Mammary epithelial cell (primary cell): ENCODE measurements at regions of chr4 and their contacts with region 1.

Region 1: DNA sequence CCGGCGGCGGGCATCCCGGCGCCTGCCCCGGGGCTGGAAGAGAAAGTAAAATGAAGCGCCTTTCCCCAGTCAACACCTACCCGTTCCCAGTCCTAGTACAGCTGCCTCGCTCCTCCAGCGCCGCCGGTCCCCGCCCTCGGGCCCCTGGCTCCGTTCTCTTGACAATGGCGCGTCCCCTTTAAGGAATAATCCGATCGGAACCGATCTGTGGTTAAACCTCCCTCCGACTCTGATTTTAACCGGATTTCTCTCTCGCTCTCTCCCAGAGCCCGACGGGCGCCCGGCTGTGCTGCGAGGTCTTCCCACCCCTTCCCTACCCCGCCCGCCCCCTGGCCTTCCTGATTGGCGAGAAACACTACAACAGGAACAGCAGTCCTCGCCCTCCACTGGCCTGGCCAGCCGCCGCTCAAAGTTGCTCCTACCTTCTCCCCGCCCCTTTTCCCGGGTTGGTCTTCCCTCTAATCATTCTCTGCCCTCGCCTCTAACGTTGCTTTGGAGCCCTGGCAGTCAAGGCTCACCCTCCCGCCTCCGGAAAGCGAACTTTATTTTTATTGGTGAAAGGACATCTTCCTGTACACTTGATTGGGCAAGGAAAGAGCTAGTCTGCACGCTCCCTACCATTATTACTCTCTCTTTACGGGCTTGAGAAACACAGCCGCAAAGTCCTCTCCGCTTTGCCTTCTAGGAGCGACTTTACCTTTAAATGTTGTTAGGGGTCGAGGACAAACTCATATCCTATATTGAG is at the start of gene FRYL:
- DNase-seq: peak; percentile 100
- H3K4me3 ChIP-seq: peak within 1 kb of the TSS; percentile 77 to 81 (median 79)
- H3K27ac ChIP-seq: peak within 1 kb of the TSS; percentile 87
- H3K4me1 ChIP-seq: peaks cover 23% of the 10 kb centered on the region
- H3K27me3 ChIP-seq: no peaks in the 10 kb centered on the region
- CTCF ChIP-seq: no peak
- total RNA-seq, gene FRYL: 74.7 to 75.7 TPM

Region 2: DNA sequence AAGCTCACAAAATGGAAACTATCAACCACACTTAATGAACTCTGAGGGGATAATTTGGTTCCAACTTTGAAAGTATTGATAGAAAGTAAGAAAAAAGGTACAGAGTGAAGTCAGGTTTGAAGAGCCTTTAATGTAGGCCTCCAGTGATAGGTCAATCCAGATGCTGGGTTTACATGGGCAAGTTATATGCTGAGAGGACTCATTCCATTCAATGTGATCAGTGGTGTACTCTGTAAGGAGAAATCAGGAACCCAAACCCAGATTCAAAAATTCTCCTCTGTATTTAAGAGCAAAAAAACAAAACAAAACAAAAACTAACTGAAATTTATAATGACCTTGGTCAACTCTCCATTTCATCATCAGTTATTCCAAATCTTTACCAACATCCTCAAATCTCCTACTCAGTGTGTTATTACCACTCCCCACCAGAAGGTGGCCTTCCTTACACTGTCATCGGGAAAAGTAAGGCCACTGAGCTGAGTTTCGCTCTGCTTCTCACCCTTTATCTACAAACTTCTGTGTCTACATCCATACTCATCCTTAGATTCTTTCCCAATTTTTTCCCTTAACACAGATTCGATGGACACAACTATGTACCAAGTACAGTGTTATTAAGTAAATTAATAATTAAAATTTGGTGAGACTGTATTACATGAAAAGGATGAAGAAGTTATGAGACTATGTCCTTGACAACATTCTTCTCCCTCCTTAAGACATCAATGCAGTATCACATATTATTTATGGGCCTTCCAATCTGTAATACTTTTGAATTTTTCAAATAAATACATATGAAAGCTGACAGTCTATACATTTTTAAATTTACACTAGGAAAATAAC is 201.8 kb before region 1 on chr4:
- CTCF ChIA-PET with region 1: interaction called, 5 read pairs
- dilution Hi-C with region 1: no loop called
- in situ Hi-C with region 1: no loop called
- intact Hi-C with region 1: loop called (anchors 1 kb)
- DNase-seq: peak; percentile 51
- H3K4me3 ChIP-seq: no peak overlapping the region
- H3K27ac ChIP-seq: no peak overlapping the region
- H3K4me1 ChIP-seq: no peaks in the 10 kb centered on the region
- H3K27me3 ChIP-seq: no peaks in the 10 kb centered on the region
- CTCF ChIP-seq: peak; percentile 79 to 90

Region 3: DNA sequence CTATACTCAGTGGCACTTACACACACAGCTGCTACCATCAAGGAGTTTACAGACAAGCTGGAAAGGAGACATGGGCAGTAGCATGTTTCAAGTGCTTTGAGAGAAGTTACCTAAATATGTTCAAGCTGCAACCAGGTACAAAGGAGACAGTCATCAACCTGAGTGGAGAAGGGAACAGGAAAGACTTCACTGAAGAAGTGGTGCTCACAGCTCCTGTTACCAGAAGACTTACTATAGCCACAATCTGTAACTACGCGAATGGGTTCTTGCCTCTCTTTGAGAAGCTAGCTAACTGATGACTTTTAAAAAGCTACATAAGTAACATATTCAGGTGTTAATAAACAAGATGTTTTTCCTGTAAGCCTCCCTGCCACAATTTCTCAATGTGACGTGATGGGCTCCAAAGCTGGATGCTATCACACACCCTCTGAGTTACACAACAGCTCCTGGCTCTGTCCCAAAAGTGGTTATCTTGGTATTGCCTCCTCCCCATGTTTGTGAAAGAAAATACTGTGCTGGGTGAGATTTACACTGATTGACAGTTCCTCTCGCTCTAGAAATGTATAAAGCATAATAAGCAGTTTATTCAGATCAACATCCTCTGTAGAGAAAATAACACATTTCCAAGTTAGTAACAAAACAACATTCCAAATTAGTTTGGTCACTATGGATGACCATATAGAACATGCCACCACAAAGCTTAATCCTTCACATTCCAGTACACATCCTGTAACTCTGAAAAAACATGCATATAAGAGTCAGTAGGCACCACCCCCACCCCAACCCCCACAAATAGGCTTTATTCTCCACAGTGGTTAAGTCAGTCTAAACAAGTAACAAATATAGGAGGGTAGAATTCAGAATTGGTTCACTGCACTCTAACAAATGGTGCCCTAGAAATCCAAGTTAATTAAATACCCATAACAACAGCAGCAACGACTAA is 81.9 kb before region 1 on chr4:
- CTCF ChIA-PET with region 1: no interaction called
- dilution Hi-C with region 1: loop called (anchors 5 kb)
- in situ Hi-C with region 1: loop called in 1 of 2 experiments (anchors 10 kb)
- intact Hi-C with region 1: loop called (anchors 1 kb)
- DNase-seq: peak; percentile 94
- H3K4me3 ChIP-seq: peak overlapping the region in 2 of 3 experiments; percentile 5 to 66
- H3K27ac ChIP-seq: peak overlapping the region; percentile 100
- H3K4me1 ChIP-seq: peaks cover 46% of the 10 kb centered on the region
- H3K27me3 ChIP-seq: no peaks in the 10 kb centered on the region
- CTCF ChIP-seq: no peak

Region 4: GRCh38 chr4:48830706-48831531 is 50.7 kb after region 1 on chr4 and contains the start of gene OCIAD1:
- CTCF ChIA-PET with region 1: no interaction called
- dilution Hi-C with region 1: no loop called
- in situ Hi-C with region 1: no loop called
- intact Hi-C with region 1: loop called (anchors 1 kb)
- DNase-seq: peak; percentile 98
- H3K4me3 ChIP-seq: peak within 1 kb of the TSS; percentile 50 to 98 (median 98)
- H3K27ac ChIP-seq: peak within 1 kb of the TSS; percentile 94
- H3K4me1 ChIP-seq: peaks cover 9% of the 10 kb centered on the region
- H3K27me3 ChIP-seq: no peaks in the 10 kb centered on the region
- CTCF ChIP-seq: no peak
- total RNA-seq, gene OCIAD1: 85.5 to 125 TPM

Region 5: DNA sequence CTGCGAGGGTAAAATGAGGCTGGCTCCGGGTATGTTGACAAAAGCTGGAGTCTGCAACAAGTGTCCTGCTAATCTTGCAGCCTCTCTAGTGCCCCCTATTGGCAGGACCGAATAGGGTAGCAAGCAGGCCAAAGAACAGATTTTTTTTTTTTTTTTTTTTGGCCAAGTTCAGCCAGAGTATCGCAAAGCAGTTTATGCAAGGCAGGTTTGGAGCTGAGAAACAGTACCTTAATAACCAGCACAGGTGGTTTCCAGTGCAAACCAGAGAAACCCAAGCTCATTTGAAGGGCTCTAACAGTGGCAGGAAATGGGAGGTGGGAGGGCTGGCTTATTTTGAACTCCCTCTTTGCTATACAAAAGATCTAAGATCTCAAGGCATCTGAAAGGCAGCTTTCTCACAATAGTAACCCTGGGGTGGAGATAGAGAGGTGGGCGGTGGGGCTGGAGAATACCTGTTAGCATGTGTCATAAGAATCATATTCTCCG is 164.6 kb after region 1 on chr4:
- CTCF ChIA-PET with region 1: interaction called, 7 read pairs
- dilution Hi-C with region 1: no loop called
- in situ Hi-C with region 1: no loop called
- intact Hi-C with region 1: loop called (anchors 5 kb)
- DNase-seq: peak; percentile 61
- H3K4me3 ChIP-seq: peak overlapping the region in 2 of 3 experiments; percentile 3 to 15
- H3K27ac ChIP-seq: peak overlapping the region; percentile 90
- H3K4me1 ChIP-seq: peaks cover 36% of the 10 kb centered on the region
- H3K27me3 ChIP-seq: no peaks in the 10 kb centered on the region
- CTCF ChIP-seq: peak; percentile 76 to 83